Activated CD4-positive, alpha-beta T cell treated with anti-CD3 and anti-CD28 coated beads, Interleukin-2, amount 10 ng/mL, durations not matched to agents 7 days and 5 days (primary cell): ENCODE measurements at regions of chr5 and their contacts with region 1.

Region 1: GRCh38 chr5:119360905-119361593 is 5.2 kb downstream of the TNFAIP8 start:
- DNase-seq: no peak
- H3K4me3 Mint-ChIP-seq: no peak overlapping the region
- H3K27ac Mint-ChIP-seq: no peak overlapping the region
- H3K4me1 Mint-ChIP-seq: peaks cover 95% of the 10 kb centered on the region
- H3K27me3 Mint-ChIP-seq: no peaks in the 10 kb centered on the region

Region 2: GRCh38 chr5:119340597-119341218 is 20.3 kb before region 1 on chr5:
- CTCF ChIA-PET with region 1: interaction called, 14 read pairs
- POLR2A ChIA-PET with region 1: interaction called, 4 read pairs
- DNase-seq: peak; percentile 83
- H3K4me3 Mint-ChIP-seq: peak overlapping the region; percentile 84
- H3K27ac Mint-ChIP-seq: peak overlapping the region; percentile 91
- H3K4me1 Mint-ChIP-seq: peaks cover 91% of the 10 kb centered on the region
- H3K27me3 Mint-ChIP-seq: no peaks in the 10 kb centered on the region

Region 3: GRCh38 chr5:119347991-119348390 is 13.1 kb before region 1 on chr5:
- CTCF ChIA-PET with region 1: interaction called, 13 read pairs
- POLR2A ChIA-PET with region 1: interaction called, 3 read pairs
- DNase-seq: no peak
- H3K4me3 Mint-ChIP-seq: no peak overlapping the region
- H3K27ac Mint-ChIP-seq: peak overlapping the region; percentile 34
- H3K4me1 Mint-ChIP-seq: peaks cover 91% of the 10 kb centered on the region
- H3K27me3 Mint-ChIP-seq: no peaks in the 10 kb centered on the region

Region 4: DNA sequence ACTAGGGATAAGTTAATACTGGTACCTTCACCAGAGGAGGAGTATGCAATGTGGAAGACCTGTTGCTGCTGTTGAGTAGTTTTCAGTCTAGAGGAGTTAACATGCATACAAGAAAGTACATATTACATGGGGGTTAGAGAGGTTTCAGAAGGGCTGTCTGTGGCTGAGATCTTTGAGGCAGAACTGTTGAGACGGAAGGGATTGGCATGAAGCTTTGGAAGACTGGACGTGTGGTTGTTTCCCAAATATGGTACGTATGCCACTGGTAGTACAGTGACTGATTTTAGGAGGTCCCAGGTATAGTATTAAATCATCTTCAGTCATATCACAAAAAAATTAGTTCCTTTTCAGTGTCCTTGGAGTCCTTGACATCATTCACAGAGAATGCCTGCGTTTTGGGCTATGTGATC is 12.4 kb after region 1 on chr5:
- CTCF ChIA-PET with region 1: interaction called, 29 read pairs
- POLR2A ChIA-PET with region 1: no interaction called
- DNase-seq: no peak
- H3K4me3 Mint-ChIP-seq: no peak overlapping the region
- H3K27ac Mint-ChIP-seq: no peak overlapping the region
- H3K4me1 Mint-ChIP-seq: peaks cover 62% of the 10 kb centered on the region
- H3K27me3 Mint-ChIP-seq: no peaks in the 10 kb centered on the region